ENCODE measurements at regions of chr17 and their contacts with region 1.

Region 1: DNA sequence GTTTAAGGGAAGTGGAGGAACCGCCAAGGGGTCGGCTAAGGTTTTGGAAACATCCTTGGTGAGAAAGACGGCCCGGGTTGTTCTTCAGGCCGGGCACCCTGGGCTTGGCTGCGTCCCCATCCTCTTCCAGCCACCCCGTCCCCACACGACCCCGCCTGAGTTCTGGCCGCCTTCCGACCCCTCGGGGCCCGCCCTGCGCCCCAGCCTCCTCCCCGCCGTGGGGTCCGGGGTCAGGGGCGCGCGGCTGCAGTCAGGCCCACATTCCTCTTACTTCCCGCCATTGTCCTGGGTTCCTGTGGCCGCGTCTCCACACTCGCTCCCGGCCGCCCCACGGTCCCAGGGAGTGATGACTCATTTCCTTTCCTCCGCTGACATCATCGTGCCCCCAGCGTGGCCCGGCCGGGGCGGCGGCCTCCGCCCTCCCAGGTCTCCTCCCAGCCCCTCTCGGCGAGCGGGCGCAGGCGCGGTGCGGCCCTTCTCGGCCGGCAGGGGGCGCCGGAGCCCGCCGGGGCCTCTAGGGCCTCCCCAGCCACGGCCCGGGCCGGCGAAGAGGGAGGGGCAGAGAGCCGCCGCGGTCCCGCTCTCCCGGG is 59.6 kb downstream of the WSB1 start:
- DNase-seq: peak; percentile 64 to 94 (median 82)
- ATAC-seq: peak; percentile 91
- H3K4me3 ChIP-seq: peak overlapping the region; percentile 67
- H3K4me3 Mint-ChIP-seq: peak overlapping the region; percentile 88
- H3K27ac ChIP-seq: peak overlapping the region; percentile 72 to 89
- H3K27ac Mint-ChIP-seq: peak overlapping the region; percentile 65
- H3K4me1 ChIP-seq: peaks cover 20% of the 10 kb centered on the region
- H3K4me1 Mint-ChIP-seq: peaks cover 19% of the 10 kb centered on the region
- H3K27me3 ChIP-seq: no peaks in the 10 kb centered on the region
- H3K27me3 Mint-ChIP-seq: no peaks in the 10 kb centered on the region
- CTCF ChIP-seq: peak; percentile 73

Region 2: GRCh38 chr17:27236717-27237315 is 116.7 kb before region 1 on chr17:
- CTCF ChIA-PET with region 1: interaction called, 6 read pairs
- POLR2A ChIA-PET with region 1: no interaction called
- intact Hi-C with region 1: loop called (anchors 1 to 5 kb)
- DNase-seq: peak; percentile 55 to 87 (median 70)
- ATAC-seq: peak; percentile 91
- H3K4me3 ChIP-seq: no peak overlapping the region
- H3K4me3 Mint-ChIP-seq: no peak overlapping the region
- H3K27ac ChIP-seq: no peak overlapping the region
- H3K27ac Mint-ChIP-seq: no peak overlapping the region
- H3K4me1 ChIP-seq: no peaks in the 10 kb centered on the region
- H3K4me1 Mint-ChIP-seq: no peaks in the 10 kb centered on the region
- H3K27me3 ChIP-seq: no peaks in the 10 kb centered on the region
- H3K27me3 Mint-ChIP-seq: no peaks in the 10 kb centered on the region
- CTCF ChIP-seq: peak; percentile 78

Region 3: DNA sequence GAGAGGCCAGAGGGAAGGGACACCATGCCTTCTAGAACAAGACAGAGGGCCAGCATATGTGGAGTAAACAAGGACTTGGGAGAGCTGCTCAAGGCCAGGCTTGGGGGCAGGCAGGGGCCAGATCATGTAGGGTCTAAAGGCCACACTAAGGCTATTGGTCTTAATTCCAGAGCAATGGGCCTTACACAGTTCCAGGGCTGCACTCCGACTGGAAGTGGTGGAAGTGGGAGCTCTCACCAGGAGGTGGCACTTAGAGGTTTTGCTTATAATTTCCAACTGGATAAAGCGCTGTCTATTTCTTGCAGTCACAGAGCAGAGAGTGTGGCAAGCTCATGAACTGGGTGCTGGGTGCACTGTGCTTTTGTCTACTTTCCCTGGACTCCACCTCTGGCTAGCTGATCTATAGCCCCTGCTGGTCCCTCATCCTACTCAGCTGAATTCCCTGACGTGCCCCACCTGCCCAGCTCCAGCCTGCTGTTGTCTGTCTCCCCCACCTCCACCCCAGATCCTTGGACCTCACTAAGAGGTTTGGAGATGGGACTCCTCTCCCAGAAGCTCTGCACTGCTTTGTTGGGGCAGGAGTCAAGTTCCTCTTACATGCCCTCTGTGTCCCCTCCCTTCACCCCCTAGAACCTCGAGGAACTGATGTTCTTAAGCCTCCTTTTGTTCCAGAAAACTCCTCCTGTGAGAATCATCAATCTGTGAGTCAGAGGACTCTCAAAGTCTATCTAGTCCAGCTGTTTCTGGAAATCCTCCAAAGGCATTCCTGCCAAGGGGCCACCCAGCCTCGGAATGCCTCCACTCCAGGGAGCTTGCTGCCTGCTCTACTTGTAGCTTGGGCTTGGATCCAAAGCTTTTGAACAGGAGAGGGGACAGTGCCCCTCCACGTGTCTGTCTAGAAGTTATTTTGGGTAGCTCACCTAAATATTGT is 54.6 kb after region 1 on chr17:
- CTCF ChIA-PET with region 1: no interaction called
- POLR2A ChIA-PET with region 1: no interaction called
- intact Hi-C with region 1: loop called in 1 of 2 experiments (anchors 10 kb)
- DNase-seq: no peak
- ATAC-seq: no peak
- H3K4me3 ChIP-seq: no peak overlapping the region
- H3K4me3 Mint-ChIP-seq: no peak overlapping the region
- H3K27ac ChIP-seq: no peak overlapping the region
- H3K27ac Mint-ChIP-seq: no peak overlapping the region
- H3K4me1 ChIP-seq: no peaks in the 10 kb centered on the region
- H3K4me1 Mint-ChIP-seq: no peaks in the 10 kb centered on the region
- H3K27me3 ChIP-seq: no peaks in the 10 kb centered on the region
- H3K27me3 Mint-ChIP-seq: no peaks in the 10 kb centered on the region
- CTCF ChIP-seq: no peak

Region 4: DNA sequence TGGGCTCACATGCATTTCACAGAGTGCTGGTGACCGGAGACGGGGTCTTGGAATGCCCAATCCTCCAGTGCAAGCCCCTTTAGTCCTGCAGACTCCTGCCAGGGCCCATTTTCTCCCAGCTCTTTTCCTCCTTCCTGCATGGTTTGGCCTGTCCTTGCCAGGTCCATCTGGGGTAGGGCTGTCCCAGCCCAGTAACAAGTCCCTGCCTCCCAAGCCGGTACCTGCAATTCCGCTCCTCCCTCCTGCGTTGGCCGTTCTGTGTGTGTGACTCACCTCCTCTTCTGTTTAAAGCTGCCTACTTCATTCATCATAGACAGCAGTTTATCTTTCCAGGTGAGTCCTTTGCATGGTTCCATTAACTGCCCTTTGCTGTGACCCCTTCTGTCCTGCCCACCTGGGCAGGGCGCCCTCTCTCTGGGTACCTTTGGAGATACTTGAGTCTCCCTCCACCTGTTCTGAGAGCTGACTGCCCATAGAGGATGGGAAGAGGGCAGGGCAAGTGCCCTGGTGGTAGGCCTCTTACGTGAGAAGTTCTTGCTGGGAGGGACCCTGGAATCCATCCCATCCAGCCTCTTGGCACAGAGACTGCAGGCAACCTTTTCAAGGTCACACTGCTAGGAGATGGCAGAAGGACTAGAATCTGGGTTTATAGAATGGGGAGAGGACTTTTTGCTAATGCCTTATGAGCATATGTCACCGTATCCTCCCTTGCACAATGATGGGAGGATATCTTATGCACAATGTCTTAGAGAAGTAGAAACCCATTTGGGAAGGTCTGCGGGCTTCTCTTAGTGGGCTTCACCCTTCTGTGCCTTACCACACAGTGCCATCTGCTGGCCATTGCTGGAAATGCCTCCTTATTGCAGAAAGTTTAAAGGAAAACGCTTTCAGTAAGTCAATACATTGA is 247.8 kb after region 1 on chr17:
- CTCF ChIA-PET with region 1: interaction called, 6 read pairs
- POLR2A ChIA-PET with region 1: interaction called, 3 read pairs
- intact Hi-C with region 1: loop called (anchors 1 kb)
- DNase-seq: peak; percentile 65 to 89 (median 80)
- ATAC-seq: peak; percentile 61
- H3K4me3 ChIP-seq: no peak overlapping the region
- H3K4me3 Mint-ChIP-seq: no peak overlapping the region
- H3K27ac ChIP-seq: no peak overlapping the region
- H3K27ac Mint-ChIP-seq: no peak overlapping the region
- H3K4me1 ChIP-seq: peaks cover 6% of the 10 kb centered on the region
- H3K4me1 Mint-ChIP-seq: peaks cover 4% of the 10 kb centered on the region
- H3K27me3 ChIP-seq: no peaks in the 10 kb centered on the region
- H3K27me3 Mint-ChIP-seq: no peaks in the 10 kb centered on the region
- CTCF ChIP-seq: peak; percentile 90

Region 5: DNA sequence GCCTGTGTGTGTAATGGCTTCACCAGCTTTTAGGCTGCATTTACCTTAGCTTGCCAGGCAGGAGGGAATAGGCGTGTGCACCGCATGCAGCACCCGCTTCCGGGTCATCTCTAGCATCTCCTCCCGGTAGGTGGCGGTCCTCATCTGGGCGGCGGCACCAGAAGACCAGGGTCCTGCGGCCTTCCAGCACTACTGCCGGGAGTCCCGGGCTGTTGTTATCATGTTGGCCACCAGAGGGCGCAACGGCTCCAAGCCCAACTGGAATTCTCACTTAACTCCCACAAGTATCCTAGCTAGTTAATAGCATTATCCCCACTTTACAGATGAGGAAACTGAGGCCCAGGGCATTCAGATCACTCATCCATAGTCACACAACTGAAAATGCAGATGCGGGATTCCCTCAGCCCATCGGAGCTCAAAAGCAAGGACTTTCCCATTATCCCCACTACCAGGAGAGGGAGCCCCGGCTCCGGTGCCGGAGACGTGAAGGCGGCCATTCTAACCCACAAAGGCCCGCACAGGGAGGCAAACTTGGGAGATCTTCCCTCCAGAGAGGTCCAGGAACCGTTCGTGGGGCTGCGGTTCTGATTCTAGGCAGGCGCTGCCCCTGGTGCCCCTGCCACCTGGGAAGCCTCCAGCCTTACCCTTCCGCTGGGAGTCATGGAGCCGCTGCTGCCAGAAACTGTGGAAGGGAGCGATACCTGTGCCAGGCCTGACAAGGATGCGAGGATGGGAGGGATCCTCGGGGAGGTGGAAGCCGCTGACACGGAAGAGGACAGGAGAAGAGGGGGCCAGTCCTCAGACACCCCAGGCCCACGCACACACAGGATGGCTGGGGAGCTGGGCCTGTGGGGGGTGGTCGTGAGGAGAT is 301.3 kb after region 1 on chr17:
- CTCF ChIA-PET with region 1: no interaction called
- POLR2A ChIA-PET with region 1: no interaction called
- intact Hi-C with region 1: loop called in 1 of 2 experiments (anchors 5 kb)
- DNase-seq: peak; percentile 40 to 81 (median 55)
- ATAC-seq: peak; percentile 69
- H3K4me3 ChIP-seq: no peak overlapping the region
- H3K4me3 Mint-ChIP-seq: no peak overlapping the region
- H3K27ac ChIP-seq: no peak overlapping the region
- H3K27ac Mint-ChIP-seq: no peak overlapping the region
- H3K4me1 ChIP-seq: peaks cover 9% of the 10 kb centered on the region
- H3K4me1 Mint-ChIP-seq: peaks cover 9% of the 10 kb centered on the region
- H3K27me3 ChIP-seq: no peaks in the 10 kb centered on the region
- H3K27me3 Mint-ChIP-seq: peaks cover 5% of the 10 kb centered on the region
- CTCF ChIP-seq: peak; percentile 97

Region 6: DNA sequence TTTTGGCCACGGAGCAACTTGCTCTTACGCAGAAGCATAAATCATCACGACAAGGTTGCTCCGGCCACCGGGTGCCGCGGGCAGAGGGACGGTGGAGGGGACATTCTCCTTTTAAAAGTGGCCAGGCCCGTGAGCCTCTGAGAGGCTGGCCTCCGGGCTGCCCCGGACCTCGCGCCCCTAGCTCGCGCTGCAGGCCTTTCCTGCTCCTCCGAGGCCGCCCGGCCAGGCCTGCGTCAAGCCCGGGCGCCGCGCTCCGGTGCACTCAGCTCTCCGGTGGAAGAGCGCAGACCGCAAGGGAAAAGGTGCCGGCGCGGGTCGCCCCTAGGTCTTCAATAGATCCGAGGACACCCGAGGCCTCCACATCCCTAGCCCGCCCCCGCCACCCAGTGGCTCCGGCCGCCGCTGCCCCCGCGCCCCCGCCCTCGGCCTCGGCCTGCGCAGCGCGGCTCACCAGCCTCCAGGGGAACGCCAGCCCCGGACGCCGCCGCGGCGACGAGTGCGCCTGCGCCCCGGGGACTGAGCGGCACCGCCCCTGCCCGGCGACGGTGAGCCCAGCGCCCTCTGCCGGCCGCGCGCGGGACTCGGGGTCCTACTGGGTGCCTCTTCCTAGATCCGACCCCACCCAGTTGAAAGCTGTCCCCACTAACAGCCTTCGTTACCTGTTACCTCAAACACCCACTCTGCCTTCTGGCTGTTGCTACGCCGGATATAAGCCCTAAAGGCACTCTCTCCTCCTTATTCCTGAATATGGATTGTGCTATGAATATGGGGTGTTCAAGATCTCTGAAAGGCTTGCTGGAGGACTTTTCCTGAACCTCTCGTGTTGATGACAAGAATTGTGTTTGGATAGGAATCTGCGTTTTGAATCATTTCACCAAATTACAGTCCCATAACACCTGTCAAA is 539.6 kb after region 1 on chr17 and contains the start of gene LYRM9:
- CTCF ChIA-PET with region 1: no interaction called
- POLR2A ChIA-PET with region 1: no interaction called
- intact Hi-C with region 1: loop called in 1 of 2 experiments (anchors 2 kb)
- DNase-seq: peak; percentile 85 to 97 (median 93)
- ATAC-seq: peak; percentile 98
- H3K4me3 ChIP-seq: peak within 1 kb of the TSS; percentile 73
- H3K4me3 Mint-ChIP-seq: peak within 1 kb of the TSS; percentile 90
- H3K27ac ChIP-seq: no peak within 1 kb of the TSS
- H3K27ac Mint-ChIP-seq: peak within 1 kb of the TSS; percentile 58
- H3K4me1 ChIP-seq: peaks cover 16% of the 10 kb centered on the region
- H3K4me1 Mint-ChIP-seq: peaks cover 27% of the 10 kb centered on the region
- H3K27me3 ChIP-seq: peaks cover 0 to 7% of the 10 kb centered on the region in 2 experiments
- H3K27me3 Mint-ChIP-seq: peaks cover 31% of the 10 kb centered on the region
- CTCF ChIP-seq: peak; percentile 82
- total RNA-seq, gene LYRM9: 13.0 to 15.7 TPM

Measured in CD4-positive, alpha-beta T cell (primary cell).